Kidney (tissue), 22 donors: ENCODE measurements at regions of chr3 and their contacts with region 1.

Region 1: DNA sequence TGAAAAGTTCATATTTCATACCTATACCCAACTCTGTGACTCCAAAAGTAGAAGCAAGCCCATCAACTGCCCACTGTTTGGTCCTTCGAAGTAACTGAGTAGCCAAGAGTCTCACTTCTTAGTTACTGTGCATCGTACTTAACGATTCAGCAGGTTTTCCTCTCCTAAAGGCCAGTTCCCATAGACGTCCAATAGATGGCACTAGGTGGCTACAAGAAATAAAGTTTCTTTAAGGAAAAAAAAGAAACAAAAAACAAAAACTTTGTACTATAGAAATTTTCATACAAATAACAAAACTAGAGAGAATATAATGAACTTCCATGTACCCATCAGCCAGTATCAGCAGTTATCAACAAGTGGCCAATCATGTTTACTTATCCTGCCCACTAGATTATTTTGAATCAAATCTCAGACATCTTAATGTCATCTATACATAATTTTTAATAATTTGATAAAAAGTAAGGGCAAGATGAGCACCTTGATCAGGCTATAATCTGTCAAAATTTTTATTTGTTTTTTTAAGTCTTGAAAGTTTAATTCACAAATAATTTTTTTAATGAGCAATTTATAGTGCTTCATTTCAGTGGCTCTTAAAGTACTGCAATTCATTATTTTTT is 63.8 kb upstream of the ACP3 start:
- DNase-seq: peak in 3 of 5 donors; percentile 32 to 87 (median 81)
- H3K4me3 ChIP-seq: no peak overlapping the region
- H3K27ac ChIP-seq: no peak overlapping the region
- H3K4me1 ChIP-seq: no peaks in the 10 kb centered on the region
- H3K27me3 ChIP-seq: no peaks in the 10 kb centered on the region
- CTCF ChIP-seq: peak; percentile 63

Region 2: DNA sequence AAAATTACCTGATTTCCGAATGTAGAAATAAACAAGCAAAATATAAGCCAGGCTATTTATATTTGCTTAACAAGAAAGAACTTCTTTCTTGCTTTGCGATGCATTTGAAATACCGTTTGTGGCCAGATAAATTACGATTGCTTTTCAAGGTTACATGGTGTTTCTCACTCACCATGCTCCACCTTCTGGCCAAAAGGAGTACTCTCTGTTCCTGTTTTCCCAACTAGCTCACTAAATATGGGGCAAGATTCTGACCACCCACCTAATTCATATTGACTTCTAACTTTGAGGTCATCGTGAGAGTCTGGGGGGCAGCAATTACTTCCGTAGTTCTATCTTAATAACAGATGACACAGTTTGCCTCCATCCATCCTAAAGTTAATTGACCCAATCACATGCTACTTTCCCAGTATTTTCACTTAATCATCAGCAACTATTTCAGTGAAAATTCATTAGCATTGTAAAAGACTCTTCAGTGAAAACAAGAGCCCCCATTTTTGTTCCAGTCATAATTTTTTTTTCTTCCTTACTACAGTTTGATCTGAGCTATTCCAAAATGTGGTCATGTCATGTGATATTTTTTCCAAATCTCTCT is 89.7 kb after region 1 on chr3:
- intact Hi-C with region 1: loop called (anchors 10 kb)
- DNase-seq: peak in 3 of 5 donors; percentile 50 to 85 (median 78)
- H3K4me3 ChIP-seq: peak overlapping the region in 1 of 3 donors; percentile 16
- H3K27ac ChIP-seq: no peak overlapping the region
- H3K4me1 ChIP-seq: no peaks in the 10 kb centered on the region
- H3K27me3 ChIP-seq: no peaks in the 10 kb centered on the region
- CTCF ChIP-seq: peak; percentile 69